ENCODE measurements at regions of chr5 and their contacts with region 1.

Region 1: DNA sequence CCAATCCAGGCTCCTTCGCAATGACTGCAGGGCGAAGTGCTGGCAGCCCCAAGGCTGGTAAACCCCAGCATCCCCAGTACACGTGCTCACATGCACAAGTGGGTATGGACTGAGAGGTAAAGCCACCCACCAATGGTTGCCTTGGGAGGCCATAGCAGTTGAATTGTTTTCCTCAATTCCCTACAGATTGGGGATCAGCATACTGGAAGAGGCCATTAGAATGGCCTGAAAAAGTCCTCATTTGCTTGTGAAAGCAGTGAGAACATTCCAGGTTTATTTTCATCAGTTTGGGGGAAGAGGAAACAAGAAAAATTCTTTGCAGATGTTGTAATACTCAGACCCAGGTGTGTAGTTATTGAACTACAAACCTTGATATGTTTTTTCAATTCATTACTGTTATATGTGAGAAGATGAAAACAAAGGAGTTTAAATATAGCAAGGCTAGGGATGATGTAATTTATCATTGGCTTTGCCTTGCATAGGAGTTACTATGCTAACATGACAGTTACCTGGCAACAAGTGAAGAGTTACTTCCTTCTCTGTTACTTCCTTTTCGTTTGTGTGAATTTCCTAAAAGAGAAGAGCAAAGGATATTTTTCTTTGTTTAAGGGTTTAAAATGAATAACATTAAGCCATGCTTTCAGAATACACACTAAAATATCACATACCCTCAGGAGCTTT is 36.4 kb downstream of the MTMR12 start:
- DNase-seq: peak; percentile 76
- ATAC-seq: peak; percentile 82
- H3K4me3 ChIP-seq: peak overlapping the region in 1 of 5 experiments; percentile 22
- H3K4me3 Mint-ChIP-seq: peak overlapping the region; percentile 74
- H3K27ac ChIP-seq: peak overlapping the region; percentile 91 to 97
- H3K27ac Mint-ChIP-seq: peak overlapping the region; percentile 95
- H3K4me1 ChIP-seq: peaks cover 25 to 37% of the 10 kb centered on the region in 2 donors
- H3K4me1 Mint-ChIP-seq: peaks cover 61% of the 10 kb centered on the region
- H3K27me3 ChIP-seq: no peaks in the 10 kb centered on the region
- H3K27me3 Mint-ChIP-seq: no peaks in the 10 kb centered on the region
- CTCF ChIP-seq: no peak

Region 2: DNA sequence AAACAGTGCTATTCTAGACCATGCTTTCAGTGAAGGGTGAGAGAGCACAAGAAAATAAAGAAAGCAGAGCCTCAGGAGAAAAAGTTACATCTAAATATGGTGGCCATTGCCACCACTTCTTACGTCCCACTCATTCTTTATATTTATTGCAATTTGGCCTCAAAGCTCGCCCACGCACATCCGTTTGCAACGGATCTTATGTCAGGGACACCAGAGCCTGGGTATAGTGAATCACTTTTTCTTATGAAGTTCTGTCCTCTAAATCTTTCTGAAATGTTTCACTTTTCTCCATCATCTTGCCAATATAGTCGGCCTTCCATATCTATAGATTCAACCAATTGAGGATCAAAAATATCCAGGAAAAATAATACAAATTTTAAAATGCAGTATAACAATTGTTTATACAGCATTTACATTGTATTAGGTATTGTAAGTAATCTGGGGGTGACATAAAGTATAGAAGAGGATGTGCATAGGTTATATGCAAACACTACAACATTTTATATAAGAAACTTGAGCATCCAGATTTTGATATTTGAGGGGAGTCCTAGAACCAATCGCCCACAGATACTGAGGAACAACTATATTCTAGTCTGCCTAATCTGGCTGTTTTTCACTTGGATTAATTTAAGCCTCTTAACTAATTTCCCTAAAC is 137.3 kb before region 1 on chr5:
- CTCF ChIA-PET with region 1: no interaction called
- POLR2A ChIA-PET with region 1: no interaction called
- intact Hi-C with region 1: no loop called
- DNase-seq: no peak
- ATAC-seq: no peak
- H3K4me3 ChIP-seq: no peak overlapping the region
- H3K4me3 Mint-ChIP-seq: no peak overlapping the region
- H3K27ac ChIP-seq: no peak overlapping the region
- H3K27ac Mint-ChIP-seq: no peak overlapping the region
- H3K4me1 ChIP-seq: no peaks in the 10 kb centered on the region
- H3K4me1 Mint-ChIP-seq: no peaks in the 10 kb centered on the region
- H3K27me3 ChIP-seq: no peaks in the 10 kb centered on the region
- H3K27me3 Mint-ChIP-seq: no peaks in the 10 kb centered on the region
- CTCF ChIP-seq: no peak

Region 3: GRCh38 chr5:32290922-32291321 is 14.6 kb after region 1 on chr5:
- CTCF ChIA-PET with region 1: no interaction called
- POLR2A ChIA-PET with region 1: interaction called, 8 read pairs
- intact Hi-C with region 1: loop called (anchors 1 kb)
- DNase-seq: peak; percentile 88
- ATAC-seq: peak; percentile 91
- H3K4me3 ChIP-seq: no peak overlapping the region
- H3K4me3 Mint-ChIP-seq: peak overlapping the region; percentile 79
- H3K27ac ChIP-seq: peak overlapping the region; percentile 73 to 86
- H3K27ac Mint-ChIP-seq: peak overlapping the region; percentile 91
- H3K4me1 ChIP-seq: peaks cover 32 to 34% of the 10 kb centered on the region in 2 donors
- H3K4me1 Mint-ChIP-seq: peaks cover 64% of the 10 kb centered on the region
- H3K27me3 ChIP-seq: no peaks in the 10 kb centered on the region
- H3K27me3 Mint-ChIP-seq: no peaks in the 10 kb centered on the region
- CTCF ChIP-seq: no peak